Activated naive CD4-positive, alpha-beta T cell treated with anti-CD3 and anti-CD28 coated beads, Interleukin-2, amount 10 ng/mL, durations not matched to agents 7 days and 5 days (primary cell): ENCODE measurements at regions of chr11 and their contacts with region 1.

Region 1: GRCh38 chr11:65569973-65570918 is at the start of gene ZNRD2:
- DNase-seq: peak; percentile 99
- H3K4me3 Mint-ChIP-seq: peak within 1 kb of the TSS; percentile 93
- H3K27ac Mint-ChIP-seq: peak within 1 kb of the TSS; percentile 98
- H3K4me1 Mint-ChIP-seq: peaks cover 72% of the 10 kb centered on the region
- H3K27me3 Mint-ChIP-seq: peaks cover 8% of the 10 kb centered on the region

Region 2: GRCh38 chr11:65432686-65433582 is 137.3 kb before region 1 on chr11:
- CTCF ChIA-PET with region 1: no interaction called
- DNase-seq: no peak
- H3K4me3 Mint-ChIP-seq: no peak overlapping the region
- H3K27ac Mint-ChIP-seq: peak overlapping the region; percentile 75
- H3K4me1 Mint-ChIP-seq: peaks cover 87% of the 10 kb centered on the region
- H3K27me3 Mint-ChIP-seq: no peaks in the 10 kb centered on the region

Region 3: GRCh38 chr11:65551572-65552398 is 18.5 kb before region 1 on chr11:
- CTCF ChIA-PET with region 1: interaction called, 24 read pairs
- DNase-seq: peak; percentile 81
- H3K4me3 Mint-ChIP-seq: peak overlapping the region; percentile 8
- H3K27ac Mint-ChIP-seq: peak overlapping the region; percentile 86
- H3K4me1 Mint-ChIP-seq: peaks cover 85% of the 10 kb centered on the region
- H3K27me3 Mint-ChIP-seq: peaks cover 4% of the 10 kb centered on the region

Region 4: DNA sequence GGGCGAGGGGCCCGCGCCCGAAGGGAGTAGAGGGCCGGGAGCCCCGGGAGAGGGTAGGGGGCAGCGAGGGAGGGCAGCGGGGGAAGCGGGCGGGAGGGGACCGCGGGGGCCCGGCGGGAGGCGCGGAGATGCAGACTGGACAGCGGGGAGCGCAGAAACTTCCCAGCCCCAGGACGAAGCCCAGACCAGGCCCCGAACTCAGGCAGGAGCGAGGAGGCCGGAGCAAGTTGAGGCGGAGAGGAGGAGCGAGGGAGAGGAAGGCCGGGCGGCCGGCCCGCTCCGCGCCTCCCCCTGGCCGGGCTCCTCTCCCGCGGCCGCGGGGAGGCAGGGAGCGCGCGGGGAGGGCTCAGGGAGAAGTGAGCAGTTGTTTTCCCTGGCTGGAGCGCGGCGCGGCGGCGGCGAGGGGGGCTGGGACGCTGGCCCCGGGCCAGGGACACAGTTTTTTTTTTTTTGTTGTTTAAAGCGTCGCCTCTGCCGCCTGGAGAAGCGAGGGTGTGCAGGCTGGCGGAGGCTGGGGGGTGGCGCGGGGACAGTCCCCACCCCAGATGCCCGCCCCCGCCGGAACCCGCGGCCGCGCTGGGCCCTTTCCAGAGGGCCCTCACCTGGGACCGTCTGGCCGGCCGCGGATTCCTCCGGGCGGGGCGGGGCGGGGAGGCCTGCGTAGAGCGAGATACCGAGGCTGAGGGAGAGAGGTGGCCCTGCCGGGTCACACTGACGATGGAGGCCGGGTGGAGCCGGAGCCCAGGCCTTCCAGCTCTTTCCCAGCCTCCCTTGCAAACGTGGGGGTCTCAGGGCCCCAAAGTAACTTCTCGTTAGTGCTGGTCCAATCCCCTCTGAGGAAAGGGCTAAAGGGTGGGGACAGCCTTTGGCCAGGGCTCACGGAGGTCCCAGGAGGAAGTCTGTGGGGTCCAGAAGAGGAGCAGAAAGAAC is 12.0 kb before region 1 on chr11 and contains the start of gene LTBP3:
- CTCF ChIA-PET with region 1: interaction called, 24 read pairs
- DNase-seq: peak; percentile 61
- H3K4me3 Mint-ChIP-seq: peak within 1 kb of the TSS; percentile 80
- H3K27ac Mint-ChIP-seq: peak within 1 kb of the TSS; percentile 88
- H3K4me1 Mint-ChIP-seq: peaks cover 67% of the 10 kb centered on the region
- H3K27me3 Mint-ChIP-seq: peaks cover 17% of the 10 kb centered on the region

Region 5: GRCh38 chr11:65588199-65589054 is 18.2 kb after region 1 on chr11:
- CTCF ChIA-PET with region 1: interaction called, 60 read pairs
- DNase-seq: peak; percentile 86
- H3K4me3 Mint-ChIP-seq: no peak overlapping the region
- H3K27ac Mint-ChIP-seq: peak overlapping the region; percentile 79
- H3K4me1 Mint-ChIP-seq: peaks cover 32% of the 10 kb centered on the region
- H3K27me3 Mint-ChIP-seq: no peaks in the 10 kb centered on the region

Region 6: DNA sequence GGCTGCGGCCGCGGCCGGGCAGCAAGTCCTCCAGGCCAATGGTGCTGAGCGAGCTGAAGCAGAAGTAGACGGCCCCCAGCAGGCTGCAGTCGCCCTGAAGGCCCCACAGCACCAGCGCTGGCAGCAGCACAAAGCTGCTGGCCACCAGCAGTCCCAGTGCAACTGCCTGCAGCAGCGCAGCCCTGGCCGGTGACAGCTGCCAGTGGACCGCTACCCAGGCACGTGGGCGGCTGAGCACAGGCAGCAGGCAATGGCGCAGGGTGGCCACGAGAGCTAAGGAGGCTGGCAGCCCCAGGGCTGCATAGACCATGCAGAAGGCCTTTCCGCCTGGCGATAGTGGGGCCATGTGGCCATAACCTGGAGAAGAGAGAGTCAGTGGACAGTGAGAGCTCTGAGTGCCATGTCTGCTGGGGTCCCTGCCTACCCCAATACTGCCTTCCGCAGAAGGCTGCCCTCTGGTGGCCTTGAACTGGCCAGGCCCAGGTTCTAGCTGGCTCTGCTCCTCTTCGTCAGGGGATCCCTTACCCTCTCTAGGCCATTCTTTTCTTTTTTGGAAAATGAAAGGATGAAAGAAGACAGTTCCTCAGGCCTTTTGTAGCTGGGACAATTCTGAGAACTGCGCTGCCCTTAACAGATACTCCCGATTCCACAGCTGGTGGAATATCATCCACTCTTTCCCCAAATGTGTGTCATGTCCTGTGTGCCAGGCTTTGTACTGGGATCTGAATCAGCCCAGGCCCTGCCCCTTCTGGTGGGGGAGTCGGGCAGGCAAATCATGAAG is 23.5 kb after region 1 on chr11:
- CTCF ChIA-PET with region 1: interaction called, 60 read pairs
- DNase-seq: peak; percentile 59
- H3K4me3 Mint-ChIP-seq: no peak overlapping the region
- H3K27ac Mint-ChIP-seq: peak overlapping the region; percentile 52
- H3K4me1 Mint-ChIP-seq: peaks cover 30% of the 10 kb centered on the region
- H3K27me3 Mint-ChIP-seq: no peaks in the 10 kb centered on the region